ENCODE measurements at regions of chr2 and their contacts with region 1.

Region 1: DNA sequence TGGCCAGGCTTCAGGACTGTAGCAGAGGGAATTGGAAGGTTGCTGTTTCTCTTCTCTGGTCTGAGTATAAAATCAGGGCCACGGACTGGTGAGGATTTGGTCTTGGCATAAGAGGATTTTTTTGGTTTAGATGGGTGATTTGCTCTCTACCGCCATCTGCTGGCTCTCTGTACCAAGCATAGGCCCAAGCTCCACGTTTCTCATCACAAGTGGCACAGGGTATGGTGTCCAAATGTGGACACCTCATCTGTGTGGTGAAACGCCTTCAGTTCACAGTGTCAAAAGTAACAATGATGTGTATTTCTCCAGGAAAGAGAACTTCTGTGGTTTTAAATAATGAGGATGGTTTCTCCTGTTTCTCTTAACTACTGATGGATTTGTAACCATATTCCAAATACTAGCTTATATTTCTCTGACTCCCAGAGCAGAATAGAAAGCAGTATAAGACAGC is 115.1 kb downstream of the EML6 start:
- DNase-seq: peak; percentile 52
- ATAC-seq: peak; percentile 95
- H3K4me3 ChIP-seq: no peak overlapping the region
- H3K27ac ChIP-seq: no peak overlapping the region
- H3K4me1 ChIP-seq: no peaks in the 10 kb centered on the region
- H3K27me3 ChIP-seq: no peaks in the 10 kb centered on the region
- CTCF ChIP-seq: peak; percentile 91
- EP300 ChIP-seq: no peak
- POLR2A ChIP-seq: no peak
- RAD21 ChIP-seq: peak; percentile 76

Region 2: DNA sequence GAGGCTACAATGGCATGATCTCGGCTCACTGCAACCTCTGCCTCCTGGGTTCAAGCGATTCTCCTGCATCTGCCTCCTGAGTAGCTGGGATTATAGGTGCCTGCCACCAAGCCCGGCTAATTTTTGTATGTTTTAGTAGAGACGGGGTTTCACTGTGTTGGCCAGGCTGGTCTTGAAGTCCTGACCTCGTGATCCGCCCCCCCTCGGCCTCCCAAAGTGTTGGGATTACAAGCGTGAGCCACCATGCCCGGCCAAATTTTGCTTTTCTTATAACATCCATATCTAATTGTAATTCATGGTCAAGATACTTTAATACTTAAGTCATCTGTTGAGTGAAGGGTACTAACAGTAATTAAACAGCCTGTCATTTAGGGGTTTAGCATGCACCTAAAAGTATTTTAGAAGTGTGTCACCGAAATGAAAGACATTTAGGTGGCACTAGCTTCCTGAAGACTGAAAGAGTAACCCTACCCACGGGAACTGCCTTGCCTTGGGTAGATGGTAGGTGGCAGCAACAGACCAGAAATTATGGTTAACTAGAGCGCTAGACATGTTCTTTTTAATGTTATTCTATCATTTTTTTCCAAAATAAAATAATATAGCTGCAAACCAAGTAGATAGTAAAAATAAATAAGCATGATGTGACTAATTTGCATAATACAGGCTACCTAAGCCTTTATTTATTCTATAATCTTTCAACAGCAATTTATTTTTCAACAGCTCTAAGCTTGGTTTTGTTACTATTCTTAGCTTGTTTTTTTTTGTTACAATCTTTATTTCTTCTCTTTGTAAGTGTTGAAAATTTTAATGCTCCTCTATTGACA is 731.8 kb before region 1 on chr2:
- CTCF ChIA-PET with region 1: interaction called, 7 read pairs
- POLR2A ChIA-PET with region 1: no interaction called
- in situ Hi-C with region 1: loop called (anchors 10 kb)
- intact Hi-C with region 1: loop called (anchors 1 kb)
- DNase-seq: peak; percentile 73
- ATAC-seq: peak; percentile 85
- H3K4me3 ChIP-seq: peak overlapping the region in 1 of 3 experiments; percentile 32; a peak in 2 of 6 replicates
- H3K27ac ChIP-seq: no peak overlapping the region
- H3K4me1 ChIP-seq: peaks cover 32% of the 10 kb centered on the region
- H3K27me3 ChIP-seq: no peaks in the 10 kb centered on the region
- CTCF ChIP-seq: peak; percentile 85
- EP300 ChIP-seq: no peak
- POLR2A ChIP-seq: no peak
- RAD21 ChIP-seq: peak; percentile 78

Region 3: DNA sequence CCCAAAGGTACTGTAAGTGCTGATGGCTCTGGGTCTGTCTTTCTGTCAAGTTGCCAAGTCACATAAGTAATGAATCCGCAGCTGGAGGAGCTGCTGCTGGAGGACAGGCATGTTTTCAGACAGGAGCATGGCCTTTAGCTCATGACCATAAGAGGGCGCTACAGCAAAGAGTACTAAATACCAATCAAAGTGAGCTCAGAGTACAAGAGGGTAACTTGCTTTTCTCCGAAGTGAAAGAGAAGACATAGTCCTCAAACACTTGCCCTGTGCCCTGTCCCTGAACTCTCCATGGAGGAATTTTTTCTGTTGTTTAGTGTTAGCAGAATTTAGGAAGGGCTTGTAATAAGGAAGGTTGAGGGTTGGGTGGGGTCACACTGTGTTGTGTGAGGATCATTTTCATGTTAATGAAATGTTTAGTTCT is 173.2 kb before region 1 on chr2:
- CTCF ChIA-PET with region 1: interaction called, 3 read pairs
- POLR2A ChIA-PET with region 1: interaction called, 3 read pairs
- in situ Hi-C with region 1: no loop called
- intact Hi-C with region 1: loop called (anchors 5 kb)
- DNase-seq: peak; percentile 76
- ATAC-seq: peak; percentile 15
- H3K4me3 ChIP-seq: no peak overlapping the region
- H3K27ac ChIP-seq: peak overlapping the region; percentile 86
- H3K4me1 ChIP-seq: peaks cover 90% of the 10 kb centered on the region
- H3K27me3 ChIP-seq: no peaks in the 10 kb centered on the region
- CTCF ChIP-seq: peak; percentile 84
- EP300 ChIP-seq: peak in 1 of 2 experiments; percentile 24; a peak in 1 of 4 replicates
- POLR2A ChIP-seq: no peak
- RAD21 ChIP-seq: peak; percentile 77

Region 4: DNA sequence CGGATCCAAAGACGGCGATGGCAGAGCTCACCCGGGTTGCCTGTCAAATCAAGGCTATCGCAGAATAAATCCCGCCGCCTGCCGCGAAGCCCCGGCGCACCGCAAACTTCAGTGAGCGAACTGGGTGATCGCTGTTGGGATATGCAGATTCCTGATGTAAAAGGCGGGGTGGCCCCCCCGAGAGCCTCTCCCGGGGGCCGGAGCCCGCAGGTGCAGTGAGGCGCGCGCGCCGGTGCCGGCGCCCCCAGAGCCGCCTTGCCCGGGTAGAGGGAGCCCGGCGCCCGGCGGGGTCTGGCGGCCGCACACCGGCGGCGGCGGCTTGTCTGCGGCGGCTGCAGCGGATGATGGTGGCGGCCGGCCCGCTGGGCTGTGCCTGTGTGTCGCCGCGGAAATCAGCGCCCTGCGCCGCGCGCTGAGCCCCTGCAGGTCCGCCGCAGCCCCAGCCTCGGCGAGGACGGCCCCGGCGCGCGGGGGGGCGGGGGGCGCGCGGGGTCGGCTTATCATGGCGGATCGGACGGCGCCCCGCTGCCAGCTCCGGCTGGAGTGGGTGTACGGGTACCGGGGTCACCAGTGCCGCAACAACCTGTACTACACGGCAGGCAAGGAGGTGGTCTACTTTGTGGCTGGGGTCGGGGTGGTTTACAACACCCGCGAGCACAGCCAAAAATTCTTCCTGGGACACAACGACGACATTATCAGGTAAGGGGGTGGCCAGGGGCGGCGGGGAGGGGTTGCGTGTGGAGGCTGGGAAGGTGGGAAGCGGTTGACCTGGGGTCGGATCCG is 113.9 kb before region 1 on chr2:
- CTCF ChIA-PET with region 1: interaction called, 3 read pairs
- POLR2A ChIA-PET with region 1: interaction called, 3 read pairs
- in situ Hi-C with region 1: no loop called
- intact Hi-C with region 1: loop called (anchors 1 kb)
- DNase-seq: no peak
- ATAC-seq: peak; percentile 4
- H3K4me3 ChIP-seq: peak overlapping the region; percentile 77 to 85 (median 84)
- H3K27ac ChIP-seq: no peak overlapping the region
- H3K4me1 ChIP-seq: peaks cover 55% of the 10 kb centered on the region
- H3K27me3 ChIP-seq: no peaks in the 10 kb centered on the region; a peak in 1 of 5 replicates
- CTCF ChIP-seq: no peak
- EP300 ChIP-seq: no peak
- POLR2A ChIP-seq: no peak
- RAD21 ChIP-seq: peak; percentile 40